ENCODE measurements at regions of chr2 and their contacts with region 1.

Region 1: GRCh38 chr2:64488050-64488974 is 34.4 kb downstream of the LGALSL start:
- DNase-seq: peak; percentile 49 to 77 (median 67)
- ATAC-seq: peak; percentile 89
- H3K4me3 ChIP-seq: no peak overlapping the region
- H3K4me3 Mint-ChIP-seq: no peak overlapping the region
- H3K27ac ChIP-seq: no peak overlapping the region
- H3K27ac Mint-ChIP-seq: no peak overlapping the region
- H3K4me1 ChIP-seq: no peaks in the 10 kb centered on the region
- H3K4me1 Mint-ChIP-seq: peaks cover 3 to 16% (median 9%) of the 10 kb centered on the region in 7 donors
- H3K27me3 ChIP-seq: no peaks in the 10 kb centered on the region
- H3K27me3 Mint-ChIP-seq: peaks cover 0 to 37% (median 0%) of the 10 kb centered on the region in 5 donors

Region 2: GRCh38 chr2:63692002-63692606 is 796.2 kb before region 1 on chr2:
- CTCF ChIA-PET with region 1: no interaction called
- POLR2A ChIA-PET with region 1: no interaction called
- intact Hi-C with region 1: loop called in 1 of 2 experiments (anchors 5 kb)
- DNase-seq: peak in 7 of 9 donors; percentile 18 to 61 (median 51)
- ATAC-seq: peak; percentile 74
- H3K4me3 ChIP-seq: no peak overlapping the region
- H3K4me3 Mint-ChIP-seq: no peak overlapping the region
- H3K27ac ChIP-seq: no peak overlapping the region
- H3K27ac Mint-ChIP-seq: no peak overlapping the region
- H3K4me1 ChIP-seq: no peaks in the 10 kb centered on the region
- H3K4me1 Mint-ChIP-seq: peaks cover 0 to 4% (median 0%) of the 10 kb centered on the region in 7 donors
- H3K27me3 ChIP-seq: no peaks in the 10 kb centered on the region
- H3K27me3 Mint-ChIP-seq: peaks cover 0 to 11% (median 0%) of the 10 kb centered on the region in 5 donors

Region 3: DNA sequence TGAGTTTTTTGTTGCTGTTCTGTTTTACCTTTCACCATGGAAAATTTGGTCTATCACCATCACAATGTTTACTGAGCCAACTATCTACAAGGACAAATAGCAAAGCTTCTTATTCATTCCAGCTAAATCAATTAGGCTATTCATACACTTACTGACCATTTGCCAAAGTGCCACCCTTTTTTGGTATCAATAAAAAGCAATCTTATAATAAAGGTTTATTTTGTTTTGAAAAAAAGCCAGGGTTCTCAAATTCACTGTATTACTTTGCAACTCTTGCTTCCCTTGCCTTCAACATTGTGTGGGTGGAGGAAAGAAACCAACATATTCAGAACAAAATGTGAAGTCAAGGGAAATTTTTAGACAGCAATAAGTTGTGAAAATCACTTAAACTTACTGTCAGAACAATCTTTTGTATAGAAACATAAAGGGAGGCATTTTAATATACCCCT is 359.3 kb before region 1 on chr2:
- CTCF ChIA-PET with region 1: no interaction called
- POLR2A ChIA-PET with region 1: no interaction called
- intact Hi-C with region 1: no loop called
- DNase-seq: no peak
- ATAC-seq: no peak
- H3K4me3 ChIP-seq: no peak overlapping the region
- H3K4me3 Mint-ChIP-seq: peak overlapping the region in 4 of 10 donors; percentile 0 to 58 (median 27)
- H3K27ac ChIP-seq: no peak overlapping the region
- H3K27ac Mint-ChIP-seq: peak overlapping the region in 4 of 9 donors; percentile 8 to 52 (median 31)
- H3K4me1 ChIP-seq: peaks cover 0 to 16% of the 10 kb centered on the region in 2 donors
- H3K4me1 Mint-ChIP-seq: peaks cover 33 to 86% (median 72%) of the 10 kb centered on the region in 7 donors
- H3K27me3 ChIP-seq: peaks cover 0 to 2% of the 10 kb centered on the region in 2 donors
- H3K27me3 Mint-ChIP-seq: no peaks in the 10 kb centered on the region

Region 4: GRCh38 chr2:64457524-64457923 is 30.8 kb before region 1 on chr2:
- CTCF ChIA-PET with region 1: interaction called, 3 read pairs
- POLR2A ChIA-PET with region 1: no interaction called
- intact Hi-C with region 1: loop called in 1 of 2 experiments (anchors 2 kb)
- DNase-seq: no peak
- ATAC-seq: no peak
- H3K4me3 ChIP-seq: no peak overlapping the region
- H3K4me3 Mint-ChIP-seq: no peak overlapping the region
- H3K27ac ChIP-seq: no peak overlapping the region
- H3K27ac Mint-ChIP-seq: no peak overlapping the region
- H3K4me1 ChIP-seq: peaks cover 0 to 4% of the 10 kb centered on the region in 2 donors
- H3K4me1 Mint-ChIP-seq: peaks cover 0 to 16% (median 11%) of the 10 kb centered on the region in 7 donors
- H3K27me3 ChIP-seq: peaks cover 0 to 2% of the 10 kb centered on the region in 2 donors
- H3K27me3 Mint-ChIP-seq: peaks cover 0 to 37% (median 4%) of the 10 kb centered on the region in 5 donors

Region 5: DNA sequence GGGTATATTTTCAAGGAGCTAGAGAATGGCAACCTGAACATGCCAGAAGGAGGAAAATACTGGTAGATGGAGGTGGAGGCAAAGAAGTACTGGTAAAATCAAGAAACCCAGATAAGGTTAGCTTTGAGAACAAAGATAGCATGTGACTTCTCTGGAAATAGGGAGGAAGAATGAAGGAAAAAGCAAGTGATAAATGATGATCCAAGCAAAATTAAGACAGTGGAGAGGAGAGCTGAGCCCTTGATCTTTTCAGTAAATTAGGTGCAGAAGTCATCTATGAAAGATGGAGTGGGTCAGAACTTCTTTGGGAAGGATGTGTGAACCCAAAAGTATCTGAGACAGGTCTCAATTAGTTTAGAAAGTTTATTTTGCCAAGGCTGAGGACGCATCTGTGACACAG is 10.1 kb after region 1 on chr2:
- CTCF ChIA-PET with region 1: interaction called, 13 read pairs
- POLR2A ChIA-PET with region 1: no interaction called
- intact Hi-C with region 1: no loop called
- DNase-seq: no peak
- ATAC-seq: no peak
- H3K4me3 ChIP-seq: no peak overlapping the region
- H3K4me3 Mint-ChIP-seq: no peak overlapping the region
- H3K27ac ChIP-seq: no peak overlapping the region
- H3K27ac Mint-ChIP-seq: no peak overlapping the region
- H3K4me1 ChIP-seq: no peaks in the 10 kb centered on the region
- H3K4me1 Mint-ChIP-seq: peaks cover 0 to 17% (median 0%) of the 10 kb centered on the region in 7 donors
- H3K27me3 ChIP-seq: no peaks in the 10 kb centered on the region
- H3K27me3 Mint-ChIP-seq: peaks cover 0 to 43% (median 8%) of the 10 kb centered on the region in 5 donors

Region 6: GRCh38 chr2:64562148-64562784 is 74.0 kb after region 1 on chr2:
- CTCF ChIA-PET with region 1: interaction called, 3 read pairs
- POLR2A ChIA-PET with region 1: no interaction called
- intact Hi-C with region 1: loop called in 1 of 2 experiments (anchors 1 kb)
- DNase-seq: peak in 7 of 9 donors; percentile 10 to 63 (median 44)
- ATAC-seq: peak; percentile 79
- H3K4me3 ChIP-seq: no peak overlapping the region
- H3K4me3 Mint-ChIP-seq: no peak overlapping the region
- H3K27ac ChIP-seq: no peak overlapping the region
- H3K27ac Mint-ChIP-seq: peak overlapping the region in 1 of 9 donors; percentile 1
- H3K4me1 ChIP-seq: peaks cover 0 to 4% of the 10 kb centered on the region in 2 donors
- H3K4me1 Mint-ChIP-seq: peaks cover 26 to 49% (median 38%) of the 10 kb centered on the region in 7 donors
- H3K27me3 ChIP-seq: no peaks in the 10 kb centered on the region
- H3K27me3 Mint-ChIP-seq: no peaks in the 10 kb centered on the region

Region 7: DNA sequence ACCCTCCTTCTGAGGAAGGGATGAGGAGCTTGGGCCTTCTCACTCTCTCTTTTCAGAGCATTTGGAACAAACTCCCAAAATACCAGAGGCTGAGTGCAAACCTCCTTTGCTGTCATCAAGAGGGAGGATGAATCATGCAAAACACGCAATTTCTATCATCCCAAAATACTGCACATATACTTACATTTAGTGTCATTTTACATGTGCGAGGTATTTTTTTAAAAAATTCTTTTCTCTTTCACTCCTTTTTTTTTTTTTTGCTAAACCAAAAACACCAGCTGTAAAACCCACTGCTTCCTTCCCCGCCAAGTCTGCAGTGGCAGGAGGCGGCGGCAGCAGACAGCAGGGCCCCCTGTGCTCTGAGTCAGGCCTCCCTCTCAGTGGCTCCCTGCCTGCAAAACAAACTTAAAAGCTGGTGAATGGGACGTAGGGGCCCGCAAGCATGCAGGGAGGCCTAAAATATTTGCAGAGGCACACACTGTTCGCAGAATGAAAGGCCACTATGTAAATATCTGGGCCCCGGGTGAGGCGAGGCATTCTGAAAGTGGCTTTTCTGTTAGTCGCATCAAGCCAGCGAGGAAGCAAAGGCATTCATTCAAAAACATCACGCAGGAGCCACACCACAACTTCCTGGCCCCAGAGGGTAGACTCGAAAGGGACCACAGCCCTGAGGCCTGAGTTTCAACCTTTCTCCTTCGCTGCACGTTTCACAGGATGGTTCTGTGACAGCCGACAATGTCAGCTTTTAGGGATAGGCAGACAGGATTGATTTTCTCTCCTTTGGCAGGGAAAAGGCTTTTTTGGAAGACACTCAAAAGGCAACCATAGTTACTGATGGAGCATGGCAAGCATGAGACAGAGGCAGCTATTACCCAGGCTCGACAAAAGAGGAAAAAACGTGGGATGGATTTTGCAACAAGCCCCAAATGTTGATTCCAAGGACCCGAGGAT is 812.7 kb after region 1 on chr2:
- CTCF ChIA-PET with region 1: no interaction called
- POLR2A ChIA-PET with region 1: no interaction called
- intact Hi-C with region 1: no loop called
- DNase-seq: peak; percentile 31 to 85 (median 81)
- ATAC-seq: peak; percentile 89
- H3K4me3 ChIP-seq: peak overlapping the region; percentile 53
- H3K4me3 Mint-ChIP-seq: peak overlapping the region; percentile 70 to 95 (median 86)
- H3K27ac ChIP-seq: peak overlapping the region; percentile 24
- H3K27ac Mint-ChIP-seq: peak overlapping the region; percentile 88 to 96 (median 94)
- H3K4me1 ChIP-seq: peaks cover 21 to 29% of the 10 kb centered on the region in 2 donors
- H3K4me1 Mint-ChIP-seq: peaks cover 24 to 57% (median 38%) of the 10 kb centered on the region in 7 donors
- H3K27me3 ChIP-seq: no peaks in the 10 kb centered on the region
- H3K27me3 Mint-ChIP-seq: peaks cover 0 to 41% (median 0%) of the 10 kb centered on the region in 5 donors